ENCODE measurements at regions of chr7 and their contacts with region 1.

Region 1: GRCh38 chr7:91165006-91165845 is 99.0 kb upstream of the FZD1 start:
- DNase-seq: peak; percentile 55
- H3K4me3 Mint-ChIP-seq: peak overlapping the region; percentile 59
- H3K27ac Mint-ChIP-seq: peak overlapping the region; percentile 95
- H3K4me1 Mint-ChIP-seq: peaks cover 19% of the 10 kb centered on the region
- H3K27me3 Mint-ChIP-seq: no peaks in the 10 kb centered on the region
- CTCF ChIP-seq: no peak

Region 2: GRCh38 chr7:91182819-91183764 is 17.9 kb after region 1 on chr7:
- CTCF ChIA-PET with region 1: interaction called, 8 read pairs
- POLR2A ChIA-PET with region 1: interaction called, 16 read pairs
- intact Hi-C with region 1: loop called (anchors 1 kb)
- DNase-seq: peak; percentile 78
- H3K4me3 Mint-ChIP-seq: no peak overlapping the region
- H3K27ac Mint-ChIP-seq: peak overlapping the region; percentile 54
- H3K4me1 Mint-ChIP-seq: peaks cover 10% of the 10 kb centered on the region
- H3K27me3 Mint-ChIP-seq: no peaks in the 10 kb centered on the region
- CTCF ChIP-seq: no peak

Region 3: DNA sequence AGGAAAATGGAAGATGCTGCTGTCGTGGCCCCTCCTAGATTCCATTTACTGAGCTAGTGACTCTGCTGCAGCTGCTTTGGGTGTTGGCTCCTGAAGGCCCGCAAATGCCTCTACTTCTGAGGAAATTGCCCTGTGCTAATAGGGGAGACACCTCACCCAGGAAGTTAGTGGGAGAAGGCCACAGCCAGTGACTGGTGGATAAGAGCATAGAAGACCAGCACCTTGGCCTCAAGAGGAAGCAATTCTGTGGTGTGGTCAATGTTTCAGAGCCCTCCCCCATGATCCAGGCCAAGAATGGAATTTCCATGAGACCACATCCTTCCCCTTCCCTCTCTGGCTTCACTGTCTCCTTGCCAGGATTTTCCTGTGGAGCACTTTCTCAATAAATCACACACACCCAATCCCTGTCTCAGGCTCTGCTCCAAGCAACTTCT is 74.0 kb after region 1 on chr7:
- CTCF ChIA-PET with region 1: interaction called, 3 read pairs
- POLR2A ChIA-PET with region 1: interaction called, 3 read pairs
- intact Hi-C with region 1: loop called (anchors 5 kb)
- DNase-seq: peak; percentile 81
- H3K4me3 Mint-ChIP-seq: peak overlapping the region; percentile 20
- H3K27ac Mint-ChIP-seq: peak overlapping the region; percentile 89
- H3K4me1 Mint-ChIP-seq: peaks cover 34% of the 10 kb centered on the region
- H3K27me3 Mint-ChIP-seq: no peaks in the 10 kb centered on the region
- CTCF ChIP-seq: no peak